Calu3 (cell line): ENCODE measurements at regions of chr6 and their contacts with region 1.

Region 1: GRCh38 chr6:109705258-109705657 is 14.2 kb downstream of the FIG4 start:
- DNase-seq: peak; percentile 85
- H3K4me3 Mint-ChIP-seq: no peak overlapping the region
- H3K27ac Mint-ChIP-seq: no peak overlapping the region
- H3K4me1 Mint-ChIP-seq: peaks cover 17% of the 10 kb centered on the region
- H3K27me3 Mint-ChIP-seq: no peaks in the 10 kb centered on the region
- CTCF ChIP-seq: peak; percentile 85

Region 2: GRCh38 chr6:109579361-109579760 is 125.9 kb before region 1 on chr6:
- CTCF ChIA-PET with region 1: no interaction called
- intact Hi-C with region 1: no loop called
- DNase-seq: no peak
- H3K4me3 Mint-ChIP-seq: no peak overlapping the region
- H3K27ac Mint-ChIP-seq: no peak overlapping the region
- H3K4me1 Mint-ChIP-seq: no peaks in the 10 kb centered on the region
- H3K27me3 Mint-ChIP-seq: peaks cover 21% of the 10 kb centered on the region
- CTCF ChIP-seq: no peak

Region 3: GRCh38 chr6:109727622-109728021 is 22.4 kb after region 1 on chr6:
- CTCF ChIA-PET with region 1: interaction called, 6 read pairs
- intact Hi-C with region 1: loop called (anchors 1 kb)
- DNase-seq: no peak
- H3K4me3 Mint-ChIP-seq: no peak overlapping the region
- H3K27ac Mint-ChIP-seq: peak overlapping the region; percentile 42
- H3K4me1 Mint-ChIP-seq: peaks cover 32% of the 10 kb centered on the region
- H3K27me3 Mint-ChIP-seq: no peaks in the 10 kb centered on the region
- CTCF ChIP-seq: no peak

Region 4: DNA sequence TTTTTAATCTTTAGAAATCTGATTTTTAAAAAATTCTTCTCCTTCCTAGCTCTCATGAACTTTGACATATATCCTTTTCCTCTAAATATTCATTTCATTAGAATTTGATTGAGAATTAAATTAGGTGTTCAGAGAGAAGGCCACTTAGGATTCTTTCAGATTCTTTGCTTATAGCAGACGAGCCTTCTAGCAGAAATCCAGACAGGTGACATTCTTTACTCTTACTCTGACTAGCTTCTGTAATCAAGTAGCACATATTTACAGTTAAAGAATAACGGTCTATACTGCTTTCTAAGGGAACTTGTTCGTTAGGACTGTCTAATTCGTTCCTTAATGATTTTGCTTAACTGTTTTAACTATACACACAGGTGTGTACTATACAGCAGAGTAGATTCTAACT is 78.9 kb after region 1 on chr6:
- CTCF ChIA-PET with region 1: no interaction called
- intact Hi-C with region 1: loop called (anchors 1 kb)
- DNase-seq: no peak
- H3K4me3 Mint-ChIP-seq: no peak overlapping the region
- H3K27ac Mint-ChIP-seq: no peak overlapping the region
- H3K4me1 Mint-ChIP-seq: no peaks in the 10 kb centered on the region
- H3K27me3 Mint-ChIP-seq: no peaks in the 10 kb centered on the region
- CTCF ChIP-seq: no peak

Region 5: DNA sequence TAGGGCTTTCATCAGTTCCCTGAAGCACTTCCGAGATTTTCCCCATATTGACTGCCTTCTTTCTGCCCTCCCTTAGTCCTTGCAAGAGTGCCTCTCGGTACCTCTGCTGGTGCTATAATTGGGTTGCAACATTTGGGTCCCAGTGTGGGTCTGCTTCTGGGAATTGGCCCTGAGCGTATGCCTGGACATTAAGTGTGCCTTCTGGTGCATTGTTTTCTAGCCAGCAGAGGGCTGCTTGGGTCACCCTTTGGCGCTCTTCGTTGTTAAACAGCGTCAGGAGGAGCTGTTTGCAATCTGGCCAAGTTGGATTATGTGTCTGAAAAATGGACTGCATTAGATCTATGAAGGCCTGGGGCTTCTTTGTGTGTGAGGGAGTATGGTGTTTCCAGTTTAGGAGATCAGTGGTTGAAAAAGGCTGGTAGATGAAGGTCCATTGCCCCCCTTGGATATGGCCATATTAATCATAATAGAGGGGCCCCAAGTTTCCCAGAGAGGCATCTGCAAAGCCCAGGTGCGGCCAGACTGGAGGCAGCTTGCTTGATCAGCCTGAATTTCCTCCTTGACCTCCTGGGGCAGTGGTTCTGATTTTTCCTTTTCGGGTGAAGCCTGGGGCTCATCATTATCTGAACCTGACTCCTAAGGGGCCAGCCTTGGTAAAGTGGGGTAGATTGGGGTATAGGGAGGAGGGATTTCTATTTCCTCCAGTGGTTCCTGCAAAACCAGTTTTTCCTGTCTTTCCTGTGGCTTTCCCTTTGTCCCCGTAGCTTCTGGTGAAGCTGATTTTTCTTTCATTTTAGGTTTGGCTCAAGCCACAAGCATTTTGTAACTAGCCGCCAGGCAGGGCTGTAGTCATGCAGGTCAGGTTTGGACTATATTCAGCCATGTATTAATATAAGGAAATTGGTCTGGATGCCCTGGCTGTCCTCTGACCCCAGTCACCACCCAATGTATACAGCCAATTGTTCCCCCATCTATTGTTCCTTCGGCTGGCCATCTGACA is 187.5 kb after region 1 on chr6:
- CTCF ChIA-PET with region 1: interaction called, 10 read pairs
- intact Hi-C with region 1: loop called (anchors 1 kb)
- DNase-seq: peak; percentile 86
- H3K4me3 Mint-ChIP-seq: peak overlapping the region; percentile 46
- H3K27ac Mint-ChIP-seq: peak overlapping the region; percentile 97
- H3K4me1 Mint-ChIP-seq: peaks cover 44% of the 10 kb centered on the region
- H3K27me3 Mint-ChIP-seq: no peaks in the 10 kb centered on the region
- CTCF ChIP-seq: peak; percentile 20

Region 6: GRCh38 chr6:110053395-110054240 is 348.4 kb after region 1 on chr6:
- CTCF ChIA-PET with region 1: no interaction called
- intact Hi-C with region 1: loop called (anchors 1 kb)
- DNase-seq: peak; percentile 44
- H3K4me3 Mint-ChIP-seq: no peak overlapping the region
- H3K27ac Mint-ChIP-seq: no peak overlapping the region
- H3K4me1 Mint-ChIP-seq: no peaks in the 10 kb centered on the region
- H3K27me3 Mint-ChIP-seq: peaks cover 17% of the 10 kb centered on the region
- CTCF ChIP-seq: no peak

Region 7: GRCh38 chr6:110378552-110378951 is 673.3 kb after region 1 on chr6:
- CTCF ChIA-PET with region 1: no interaction called
- intact Hi-C with region 1: no loop called
- DNase-seq: no peak
- H3K4me3 Mint-ChIP-seq: no peak overlapping the region
- H3K27ac Mint-ChIP-seq: no peak overlapping the region
- H3K4me1 Mint-ChIP-seq: no peaks in the 10 kb centered on the region
- H3K27me3 Mint-ChIP-seq: peaks cover 60% of the 10 kb centered on the region
- CTCF ChIP-seq: no peak

Region 8: GRCh38 chr6:110389689-110390382 is 684.6 kb after region 1 on chr6:
- CTCF ChIA-PET with region 1: interaction called, 3 read pairs
- intact Hi-C with region 1: loop called (anchors 1 kb)
- DNase-seq: no peak
- H3K4me3 Mint-ChIP-seq: no peak overlapping the region
- H3K27ac Mint-ChIP-seq: no peak overlapping the region
- H3K4me1 Mint-ChIP-seq: peaks cover 8% of the 10 kb centered on the region
- H3K27me3 Mint-ChIP-seq: no peaks in the 10 kb centered on the region
- CTCF ChIP-seq: no peak